ENCODE measurements at regions of chr19 and their contacts with region 1.

Region 1: GRCh38 chr19:10835754-10836477 is at the start of gene TMED1:
- DNase-seq: peak; percentile 99

Region 2: GRCh38 chr19:10701955-10702525 is 133.9 kb before region 1 on chr19:
- CTCF ChIA-PET with region 1: no interaction called
- POLR2A ChIA-PET with region 1: interaction called, 10 read pairs
- DNase-seq: peak; percentile 47

Region 3: DNA sequence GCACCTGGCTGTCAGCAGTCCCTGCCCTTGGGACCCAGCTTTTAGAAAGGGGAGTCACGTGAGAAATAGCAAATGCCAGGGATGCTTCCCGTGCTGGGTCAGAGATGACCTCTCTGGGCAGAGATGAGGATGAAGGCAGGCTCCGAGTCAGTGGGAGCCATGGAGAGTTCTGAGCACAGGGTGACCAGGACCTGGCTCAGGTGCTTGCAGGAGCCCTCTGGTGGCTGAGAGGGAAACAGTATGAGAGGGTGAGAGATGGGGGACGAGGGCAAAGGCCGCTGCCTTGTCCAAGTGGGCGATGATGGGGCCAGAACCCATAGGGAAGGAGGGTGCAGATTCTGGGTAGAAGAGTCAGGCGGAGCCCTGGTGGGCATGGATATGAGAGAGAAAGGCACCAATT is 15.7 kb before region 1 on chr19:
- CTCF ChIA-PET with region 1: no interaction called
- POLR2A ChIA-PET with region 1: interaction called, 18 read pairs
- DNase-seq: no peak

Region 4: DNA sequence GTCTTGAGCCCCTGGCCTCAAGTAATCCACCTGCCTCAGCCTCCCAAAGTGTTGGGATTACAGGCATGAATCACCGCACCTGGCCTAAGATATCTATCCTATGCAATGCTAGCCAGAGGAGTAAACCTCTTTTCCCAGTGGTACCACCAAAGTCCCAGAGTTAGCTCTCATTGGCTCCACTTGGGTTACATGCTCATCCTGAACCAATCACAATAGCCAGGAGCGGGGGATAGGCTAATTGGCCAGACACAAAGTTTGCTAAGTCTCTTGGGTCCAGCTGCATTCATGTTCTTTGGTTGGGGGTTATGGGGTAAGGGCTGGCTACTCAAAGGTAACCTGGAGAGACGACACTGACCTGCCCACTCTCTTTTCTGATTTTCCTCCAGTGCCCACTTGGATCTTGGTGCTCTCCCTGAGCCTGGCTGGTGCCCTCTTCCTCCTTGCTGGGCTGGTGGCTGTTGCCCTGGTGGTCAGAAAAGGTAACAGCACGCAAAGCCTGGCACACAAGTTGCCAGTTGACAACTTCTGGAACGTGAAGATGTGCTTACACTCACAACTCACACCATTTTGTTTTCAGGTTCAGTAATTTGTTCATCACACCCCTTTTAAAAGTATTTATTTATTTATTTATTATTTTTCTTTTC is 20.1 kb after region 1 on chr19:
- CTCF ChIA-PET with region 1: interaction called, 6 read pairs
- POLR2A ChIA-PET with region 1: interaction called, 72 read pairs
- DNase-seq: no peak

Region 5: GRCh38 chr19:10870955-10871603 is 35.2 kb after region 1 on chr19 and contains the start of gene CARM1:
- CTCF ChIA-PET with region 1: interaction called, 8 read pairs
- POLR2A ChIA-PET with region 1: interaction called, 72 read pairs
- DNase-seq: peak; percentile 99

Measured in HEK293T (cell line).